Psoas muscle (tissue), 8 donors: ENCODE measurements at regions of chr12 and their contacts with region 1.

Region 1: GRCh38 chr12:19186722-19187661 is 57.5 kb downstream of the PLEKHA5 start:
- DNase-seq: no peak
- ATAC-seq: no peak
- H3K4me3 ChIP-seq: no peak overlapping the region
- H3K27ac ChIP-seq: no peak overlapping the region
- H3K4me1 ChIP-seq: no peaks in the 10 kb centered on the region
- H3K27me3 ChIP-seq: no peaks in the 10 kb centered on the region
- CTCF ChIP-seq: peak; percentile 57

Region 2: DNA sequence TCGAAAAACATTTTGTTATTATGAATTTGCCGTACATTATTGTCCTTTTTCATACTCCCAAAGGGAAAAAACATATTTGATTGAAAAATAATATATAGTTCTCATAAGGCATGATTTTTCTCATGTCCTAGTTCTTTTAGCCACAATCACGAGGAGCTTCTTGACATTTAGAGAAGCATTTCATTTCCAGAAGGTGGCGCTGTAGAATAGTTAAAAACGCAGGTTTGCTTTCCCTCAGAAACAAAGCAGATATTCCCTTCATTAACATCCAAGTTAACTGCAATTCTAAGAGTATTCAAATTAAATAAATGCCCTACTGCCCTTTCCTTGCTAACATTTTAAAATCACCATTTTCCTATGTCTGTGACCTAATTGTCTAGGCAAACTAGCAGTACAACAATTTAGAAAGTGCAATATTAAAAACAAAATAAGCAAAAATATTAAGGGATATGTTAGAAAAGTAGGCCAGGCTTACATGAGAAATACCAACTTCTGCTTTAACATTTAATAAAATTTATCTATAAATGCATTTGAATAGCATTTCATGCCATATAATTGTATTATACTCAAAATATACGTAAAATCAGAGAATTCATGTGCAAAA is 936.6 kb before region 1 on chr12:
- intact Hi-C with region 1: loop called in 1 of 2 experiments (anchors 10 kb)
- DNase-seq: no peak
- ATAC-seq: no peak
- H3K4me3 ChIP-seq: no peak overlapping the region
- H3K27ac ChIP-seq: no peak overlapping the region
- H3K4me1 ChIP-seq: no peaks in the 10 kb centered on the region
- H3K27me3 ChIP-seq: no peaks in the 10 kb centered on the region
- CTCF ChIP-seq: peak; percentile 49

Region 3: GRCh38 chr12:18861287-18861858 is 325.6 kb before region 1 on chr12:
- intact Hi-C with region 1: loop called in 1 of 2 experiments (anchors 10 kb)
- DNase-seq: no peak
- ATAC-seq: no peak
- H3K4me3 ChIP-seq: no peak overlapping the region
- H3K27ac ChIP-seq: no peak overlapping the region
- H3K4me1 ChIP-seq: no peaks in the 10 kb centered on the region
- H3K27me3 ChIP-seq: no peaks in the 10 kb centered on the region
- CTCF ChIP-seq: peak; percentile 41

Region 4: GRCh38 chr12:19165451-19165850 is 21.5 kb before region 1 on chr12:
- intact Hi-C with region 1: no loop called
- DNase-seq: no peak
- ATAC-seq: no peak
- H3K4me3 ChIP-seq: no peak overlapping the region
- H3K27ac ChIP-seq: no peak overlapping the region
- H3K4me1 ChIP-seq: no peaks in the 10 kb centered on the region
- H3K27me3 ChIP-seq: no peaks in the 10 kb centered on the region
- CTCF ChIP-seq: no peak

Region 5: GRCh38 chr12:19694627-19695026 is 507.6 kb after region 1 on chr12:
- intact Hi-C with region 1: no loop called
- DNase-seq: no peak
- ATAC-seq: no peak
- H3K4me3 ChIP-seq: no peak overlapping the region
- H3K27ac ChIP-seq: no peak overlapping the region
- H3K4me1 ChIP-seq: no peaks in the 10 kb centered on the region
- H3K27me3 ChIP-seq: no peaks in the 10 kb centered on the region
- CTCF ChIP-seq: no peak